ENCODE measurements at regions of chrX and their contacts with region 1.

Region 1: DNA sequence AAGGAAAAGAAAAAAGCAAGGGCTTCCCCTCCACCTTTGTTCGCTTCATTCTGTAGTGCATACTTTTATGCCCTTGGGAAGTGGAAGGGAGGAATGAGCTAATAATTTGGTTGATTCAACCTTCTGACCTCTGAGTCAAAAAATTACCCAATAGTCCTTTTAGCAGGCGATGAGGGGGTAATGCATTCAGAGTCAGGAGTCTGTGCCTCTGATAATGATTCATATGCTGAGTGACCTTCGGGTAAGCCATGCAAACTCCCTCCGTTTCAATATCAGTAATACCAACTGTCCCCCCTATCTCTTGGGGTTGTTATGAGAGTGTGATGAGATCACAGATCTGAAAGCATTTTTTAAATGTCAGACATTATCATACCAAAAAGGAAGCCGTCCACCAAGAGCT is 41.6 kb upstream of the ACSL4 start:
- DNase-seq: no peak
- H3K4me3 Mint-ChIP-seq: no peak overlapping the region
- H3K27ac Mint-ChIP-seq: no peak overlapping the region
- H3K4me1 Mint-ChIP-seq: peaks cover 20% of the 10 kb centered on the region
- H3K27me3 Mint-ChIP-seq: no peaks in the 10 kb centered on the region
- CTCF ChIP-seq: no peak

Region 2: DNA sequence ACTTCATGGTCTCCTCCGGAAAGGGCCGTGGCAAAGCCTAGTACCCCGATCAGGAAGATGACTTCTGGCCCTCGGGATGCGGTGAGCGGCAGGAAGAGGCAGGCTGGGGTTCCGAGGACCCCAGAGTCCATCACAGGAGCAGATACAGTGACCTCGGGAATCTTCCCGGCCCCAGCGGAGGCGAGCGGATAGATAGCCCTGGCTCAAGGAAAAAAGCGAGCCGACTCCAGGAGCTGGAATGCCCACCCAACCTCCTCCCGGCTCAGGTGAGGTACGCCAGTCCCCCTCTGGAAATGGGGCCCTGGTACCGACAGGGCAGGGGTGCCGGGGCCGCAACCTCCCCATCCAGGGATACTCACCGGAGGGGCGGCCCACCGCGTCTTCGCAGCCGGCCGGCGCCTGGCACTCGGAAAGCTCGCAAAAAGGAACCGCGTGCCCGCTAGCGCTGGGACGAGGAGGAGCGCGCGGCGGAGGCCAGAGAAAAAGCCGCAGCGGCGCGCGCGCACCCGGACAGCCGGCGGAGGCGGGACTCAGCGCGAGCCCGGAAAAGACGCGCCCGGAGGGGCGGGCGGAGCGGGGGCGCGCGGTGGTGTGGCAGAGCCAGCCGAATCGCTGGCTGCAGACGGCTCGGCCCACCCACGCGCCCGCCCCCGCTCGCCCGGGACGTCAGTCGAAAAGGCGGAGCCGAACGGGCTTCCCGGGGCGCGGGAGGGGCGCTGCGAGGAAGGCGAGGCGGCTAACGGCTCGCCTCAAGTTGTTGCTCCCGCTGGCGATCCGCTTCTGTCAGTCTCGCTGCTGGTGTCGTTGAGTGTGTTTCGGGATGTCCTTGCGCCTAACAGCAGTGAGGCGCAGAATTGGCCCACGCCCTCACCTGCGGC is 41.7 kb before region 1 on chrX and contains the start of gene ACSL4:
- CTCF ChIA-PET with region 1: no interaction called
- intact Hi-C with region 1: loop called (anchors 5 kb)
- DNase-seq: peak; percentile 92
- H3K4me3 Mint-ChIP-seq: peak within 1 kb of the TSS; percentile 91
- H3K27ac Mint-ChIP-seq: peak within 1 kb of the TSS; percentile 92
- H3K4me1 Mint-ChIP-seq: no peaks in the 10 kb centered on the region
- H3K27me3 Mint-ChIP-seq: no peaks in the 10 kb centered on the region
- CTCF ChIP-seq: no peak
- total RNA-seq, gene ACSL4: 64.8 and 72.4 TPM in 2 replicates

Region 3: GRCh38 chrX:109840585-109840984 is 65.9 kb after region 1 on chrX:
- CTCF ChIA-PET with region 1: no interaction called
- intact Hi-C with region 1: no loop called
- DNase-seq: peak; percentile 35
- H3K4me3 Mint-ChIP-seq: no peak overlapping the region
- H3K27ac Mint-ChIP-seq: no peak overlapping the region
- H3K4me1 Mint-ChIP-seq: no peaks in the 10 kb centered on the region
- H3K27me3 Mint-ChIP-seq: no peaks in the 10 kb centered on the region
- CTCF ChIP-seq: no peak